ENCODE measurements at regions of chr7 and their contacts with region 1.

Region 1: DNA sequence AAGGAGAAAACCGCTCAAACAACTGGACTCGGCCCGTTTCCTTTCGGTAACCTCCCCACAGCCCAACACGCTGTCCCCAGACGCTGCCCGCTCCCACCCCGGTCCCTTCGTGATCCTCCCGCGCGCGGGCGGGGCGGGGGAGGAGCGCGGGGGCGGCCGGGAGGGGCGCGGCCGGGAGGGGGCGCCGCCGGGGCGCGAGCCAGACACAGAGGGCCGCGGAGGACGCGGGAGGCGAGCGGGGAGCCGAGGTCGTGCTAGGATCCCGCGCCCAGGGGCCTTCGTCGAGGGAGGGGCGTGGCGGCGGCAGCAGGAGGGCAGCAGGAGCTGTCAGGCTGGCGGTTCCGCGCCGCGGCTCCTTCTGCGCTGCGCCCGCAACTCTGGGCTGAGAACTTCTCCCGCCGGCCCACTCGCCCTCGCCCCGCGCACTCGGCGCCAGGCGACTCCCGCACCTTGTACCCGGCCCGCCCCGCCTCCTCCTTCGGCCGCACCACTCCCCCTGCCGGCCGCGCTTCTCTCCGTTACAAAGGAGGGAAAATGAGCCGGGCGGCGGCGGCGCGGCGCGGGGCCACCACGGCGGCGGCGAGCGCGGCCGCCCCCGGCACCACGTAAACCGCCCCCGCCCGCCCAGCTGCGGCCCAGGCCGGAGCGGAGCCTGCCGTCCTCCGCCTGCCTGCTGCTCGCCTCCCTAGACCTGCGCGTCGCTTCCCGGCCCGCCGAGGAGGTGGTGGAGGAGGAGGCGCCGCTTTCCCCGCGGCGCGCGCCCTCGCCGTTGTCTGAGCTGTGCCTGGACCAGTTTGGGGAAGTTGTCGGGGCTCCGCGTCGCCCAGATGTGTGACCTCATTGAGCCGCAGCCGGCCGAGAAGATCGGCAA is at the start of gene CDK14:
- DNase-seq: peak; percentile 53 to 74
- H3K4me3 ChIP-seq: peak within 1 kb of the TSS; percentile 67 to 90 (median 71)
- H3K27ac ChIP-seq: peak within 1 kb of the TSS; percentile 90 to 93
- H3K4me1 ChIP-seq: no peaks in the 10 kb centered on the region
- H3K27me3 ChIP-seq: no peaks in the 10 kb centered on the region
- CTCF ChIP-seq: peak in 2 of 3 donors; percentile 22 to 59
- POLR2A ChIP-seq: no peak
- total RNA-seq, gene CDK14: 16.3 to 64.7 (median 29.8) TPM

Region 2: GRCh38 chr7:90642962-90643361 is 46.9 kb after region 1 on chr7:
- intact Hi-C with region 1: no loop called
- DNase-seq: no peak
- H3K4me3 ChIP-seq: no peak overlapping the region
- H3K27ac ChIP-seq: no peak overlapping the region
- H3K4me1 ChIP-seq: no peaks in the 10 kb centered on the region
- H3K27me3 ChIP-seq: no peaks in the 10 kb centered on the region
- CTCF ChIP-seq: no peak
- POLR2A ChIP-seq: no peak

Region 3: DNA sequence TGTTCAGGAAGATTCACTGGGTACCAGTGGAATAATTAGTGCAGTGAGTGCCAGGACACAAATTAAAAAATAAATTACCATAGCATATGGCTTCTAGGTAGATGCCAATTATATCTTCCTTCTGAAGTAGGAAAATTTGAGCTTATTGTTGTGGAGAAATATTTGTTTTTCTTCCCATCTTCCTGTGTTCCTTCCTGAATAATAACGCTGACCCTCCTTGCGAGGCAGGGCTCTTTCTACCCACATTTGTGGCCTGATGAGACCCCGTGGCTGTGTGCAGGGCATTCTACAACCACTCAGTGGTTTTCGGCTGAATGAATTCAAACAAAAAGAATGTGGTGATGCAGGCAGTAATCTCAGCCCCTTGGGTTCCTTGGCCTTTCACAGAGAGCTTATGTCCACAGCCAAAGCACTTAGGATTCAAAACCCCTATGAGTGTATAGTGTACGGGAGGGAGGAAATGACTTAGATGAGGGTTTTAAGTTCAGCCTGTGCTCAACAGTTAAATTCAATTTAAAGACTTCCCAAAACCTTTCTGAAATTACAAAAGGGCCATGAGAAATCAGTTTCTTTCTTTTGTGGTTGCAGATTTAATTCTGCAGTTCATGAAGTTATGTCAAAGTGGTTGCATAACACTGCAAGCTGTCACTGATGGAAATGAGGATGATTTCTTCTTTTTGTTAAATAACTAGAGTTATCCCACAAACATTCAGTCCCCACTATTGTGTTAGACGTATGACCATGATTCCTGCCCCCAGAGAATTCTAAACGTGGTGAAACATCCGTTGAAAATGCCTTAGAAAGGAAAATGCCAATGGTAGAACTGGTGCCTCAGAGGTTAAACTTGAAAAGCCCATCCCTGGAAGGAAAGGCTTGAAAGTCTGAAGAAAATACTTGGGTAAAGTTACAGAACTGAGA is 923.5 kb after region 1 on chr7:
- intact Hi-C with region 1: no loop called
- DNase-seq: no peak
- H3K4me3 ChIP-seq: no peak overlapping the region
- H3K27ac ChIP-seq: peak overlapping the region in 1 of 2 donors; percentile 19
- H3K4me1 ChIP-seq: no peaks in the 10 kb centered on the region
- H3K27me3 ChIP-seq: no peaks in the 10 kb centered on the region
- CTCF ChIP-seq: no peak
- POLR2A ChIP-seq: no peak

Region 4: DNA sequence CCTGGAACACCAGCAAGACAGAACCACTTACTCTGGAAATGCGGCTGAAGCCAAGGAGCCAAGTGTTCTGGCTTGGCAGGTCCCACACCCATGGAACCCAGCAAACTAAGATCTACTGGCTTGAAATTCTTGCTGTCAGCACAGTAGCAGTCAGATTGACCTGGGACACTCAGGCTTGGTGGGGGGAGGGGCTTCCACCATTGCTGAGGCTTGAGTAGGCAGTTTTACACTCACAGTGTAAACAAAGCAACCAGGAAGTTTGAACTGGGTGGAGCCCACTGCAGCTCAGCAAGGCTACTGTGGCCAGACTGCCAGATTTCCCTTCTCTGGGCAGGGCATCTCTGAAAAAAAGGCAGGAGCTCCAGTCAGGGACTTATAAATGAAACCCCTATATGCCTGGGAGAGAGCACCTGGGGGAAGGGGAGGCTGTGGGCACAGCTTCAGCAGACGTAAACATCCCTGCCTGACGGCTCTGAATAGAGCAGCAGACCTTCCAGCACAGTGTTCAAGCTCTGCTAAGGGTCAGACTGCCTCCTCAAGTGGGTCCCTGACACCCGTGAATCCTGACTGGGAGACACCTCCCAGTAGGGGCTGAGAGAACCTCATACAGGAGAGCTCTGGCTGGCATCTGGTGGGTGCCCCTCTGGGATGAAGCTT is 1163.3 kb after region 1 on chr7:
- intact Hi-C with region 1: loop called (anchors 5 kb)
- DNase-seq: peak; percentile 30 to 74
- H3K4me3 ChIP-seq: no peak overlapping the region
- H3K27ac ChIP-seq: no peak overlapping the region
- H3K4me1 ChIP-seq: no peaks in the 10 kb centered on the region
- H3K27me3 ChIP-seq: no peaks in the 10 kb centered on the region
- CTCF ChIP-seq: no peak
- POLR2A ChIP-seq: no peak